Transverse colon (tissue), 4 donors: ENCODE measurements at regions of chr4 and their contacts with region 1.

Region 1: DNA sequence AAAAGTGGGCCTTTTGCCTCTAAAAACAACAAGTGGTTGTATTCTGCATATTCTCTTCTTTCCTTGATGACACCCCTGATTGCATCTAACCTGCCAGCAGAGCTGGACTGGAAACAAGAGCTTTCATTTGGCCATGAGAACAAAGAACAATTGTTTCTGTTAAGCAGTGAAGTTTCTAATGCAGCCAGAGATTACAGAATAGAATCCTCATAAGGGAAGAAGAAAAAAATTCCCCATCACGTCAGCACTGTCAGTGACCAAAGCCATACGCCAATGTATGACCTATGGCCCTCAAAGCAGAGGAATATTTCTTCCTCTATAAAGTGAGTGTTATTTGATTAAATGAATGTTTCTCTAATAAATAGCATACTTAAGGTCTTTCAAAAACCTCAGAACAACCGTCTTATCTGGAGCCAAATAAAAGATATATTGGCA is 529.1 kb upstream of the INTU start:
- DNase-seq: no peak
- H3K4me3 ChIP-seq: no peak overlapping the region
- H3K27ac ChIP-seq: no peak overlapping the region
- H3K4me1 ChIP-seq: no peaks in the 10 kb centered on the region
- H3K27me3 ChIP-seq: no peaks in the 10 kb centered on the region
- CTCF ChIP-seq: no peak
- EP300 ChIP-seq: no peak
- POLR2A ChIP-seq: no peak

Region 2: GRCh38 chr4:127082986-127083385 is 20.7 kb before region 1 on chr4:
- in situ Hi-C with region 1: no loop called
- intact Hi-C with region 1: loop called (anchors 1 kb)
- DNase-seq: no peak
- H3K4me3 ChIP-seq: no peak overlapping the region
- H3K27ac ChIP-seq: no peak overlapping the region
- H3K4me1 ChIP-seq: no peaks in the 10 kb centered on the region
- H3K27me3 ChIP-seq: no peaks in the 10 kb centered on the region
- CTCF ChIP-seq: no peak
- EP300 ChIP-seq: no peak
- POLR2A ChIP-seq: no peak

Region 3: DNA sequence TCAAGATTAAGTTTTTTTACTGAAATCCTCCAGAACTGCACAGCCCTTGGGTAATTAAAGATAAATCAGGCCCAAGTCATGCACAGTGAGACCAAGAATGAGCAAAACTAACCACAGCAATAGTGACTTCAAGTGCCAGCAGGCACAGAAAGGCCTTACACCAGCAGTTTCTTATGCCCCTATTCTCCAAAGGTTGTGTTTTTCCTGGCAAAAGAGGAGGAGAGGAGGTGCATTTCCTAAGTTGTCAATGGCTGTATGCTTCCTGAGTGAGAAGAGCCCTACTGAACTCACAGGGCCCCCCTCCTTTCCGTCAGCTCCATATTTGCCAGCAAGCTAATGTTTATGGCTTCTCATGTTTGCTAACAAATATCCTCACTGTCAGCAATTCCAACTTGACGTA is 110.3 kb after region 1 on chr4:
- in situ Hi-C with region 1: no loop called
- intact Hi-C with region 1: no loop called
- DNase-seq: no peak
- H3K4me3 ChIP-seq: no peak overlapping the region
- H3K27ac ChIP-seq: no peak overlapping the region
- H3K4me1 ChIP-seq: peaks cover 0 to 14% (median 3%) of the 10 kb centered on the region in 4 donors
- H3K27me3 ChIP-seq: no peaks in the 10 kb centered on the region
- CTCF ChIP-seq: no peak
- EP300 ChIP-seq: no peak
- POLR2A ChIP-seq: no peak

Region 4: GRCh38 chr4:128831531-128832242 is 1728.0 kb after region 1 on chr4:
- in situ Hi-C with region 1: no loop called
- intact Hi-C with region 1: no loop called
- DNase-seq: no peak
- H3K4me3 ChIP-seq: no peak overlapping the region
- H3K27ac ChIP-seq: peak overlapping the region in 2 of 4 donors; percentile 17 to 50
- H3K4me1 ChIP-seq: peaks cover 15 to 44% (median 23%) of the 10 kb centered on the region in 4 donors
- H3K27me3 ChIP-seq: no peaks in the 10 kb centered on the region
- CTCF ChIP-seq: no peak
- EP300 ChIP-seq: no peak
- POLR2A ChIP-seq: no peak